Ascending aorta (tissue), 2 donors: ENCODE measurements at regions of chr1 and their contacts with region 1.

Region 1: GRCh38 chr1:72184099-72184701 is 98.1 kb downstream of the NEGR1 start:
- DNase-seq: no peak
- H3K4me3 ChIP-seq: no peak overlapping the region
- H3K27ac ChIP-seq: peak overlapping the region; percentile 31 to 68
- H3K4me1 ChIP-seq: peaks cover 0 to 14% of the 10 kb centered on the region in 2 donors
- H3K27me3 ChIP-seq: no peaks in the 10 kb centered on the region
- CTCF ChIP-seq: no peak

Region 2: GRCh38 chr1:72086394-72086793 is 97.8 kb before region 1 on chr1:
- intact Hi-C with region 1: no loop called
- DNase-seq: no peak
- H3K4me3 ChIP-seq: no peak overlapping the region
- H3K27ac ChIP-seq: no peak overlapping the region
- H3K4me1 ChIP-seq: no peaks in the 10 kb centered on the region
- H3K27me3 ChIP-seq: no peaks in the 10 kb centered on the region
- CTCF ChIP-seq: no peak

Region 3: GRCh38 chr1:72282271-72283021 is 98.2 kb after region 1 on chr1 and contains the start of gene NEGR1:
- intact Hi-C with region 1: loop called (anchors 2 kb)
- DNase-seq: peak; percentile 49 to 94
- H3K4me3 ChIP-seq: peak within 1 kb of the TSS; percentile 78 to 95
- H3K27ac ChIP-seq: peak within 1 kb of the TSS; percentile 92 to 95
- H3K4me1 ChIP-seq: peaks cover 0 to 5% of the 10 kb centered on the region in 2 donors
- H3K27me3 ChIP-seq: no peaks in the 10 kb centered on the region
- CTCF ChIP-seq: peak in 1 of 3 experiments; percentile 34
- total RNA-seq, gene NEGR1: 42.8 TPM